ENCODE measurements at regions of chr2 and their contacts with region 1.

Region 1: DNA sequence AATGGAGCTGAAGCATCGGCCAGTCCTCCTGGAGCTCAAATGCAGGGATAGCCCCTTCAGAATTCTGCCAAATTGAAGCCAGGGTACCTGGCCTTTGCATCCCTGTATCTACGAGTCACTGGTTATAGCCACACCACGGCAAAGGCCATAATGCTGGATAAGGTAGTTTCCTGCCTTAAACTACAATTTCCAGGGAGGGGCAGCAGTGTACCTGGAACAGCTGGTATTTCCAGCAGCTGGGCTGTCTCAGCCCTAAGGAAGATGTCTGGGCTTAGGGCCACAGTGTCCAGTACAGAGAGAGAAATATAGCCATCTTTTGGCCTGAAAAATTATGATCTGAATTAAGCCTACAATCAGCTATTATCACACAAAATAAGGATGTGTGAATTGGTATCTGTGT is 180.3 kb downstream of the GCA start:
- DNase-seq: peak; percentile 63 to 73
- H3K4me3 ChIP-seq: no peak overlapping the region
- H3K4me3 Mint-ChIP-seq: no peak overlapping the region
- H3K27ac Mint-ChIP-seq: no peak overlapping the region
- H3K4me1 ChIP-seq: no peaks in the 10 kb centered on the region
- H3K4me1 Mint-ChIP-seq: no peaks in the 10 kb centered on the region
- H3K27me3 ChIP-seq: no peaks in the 10 kb centered on the region
- H3K27me3 Mint-ChIP-seq: peaks cover 7% of the 10 kb centered on the region
- CTCF ChIP-seq: peak; percentile 48 to 62

Region 2: DNA sequence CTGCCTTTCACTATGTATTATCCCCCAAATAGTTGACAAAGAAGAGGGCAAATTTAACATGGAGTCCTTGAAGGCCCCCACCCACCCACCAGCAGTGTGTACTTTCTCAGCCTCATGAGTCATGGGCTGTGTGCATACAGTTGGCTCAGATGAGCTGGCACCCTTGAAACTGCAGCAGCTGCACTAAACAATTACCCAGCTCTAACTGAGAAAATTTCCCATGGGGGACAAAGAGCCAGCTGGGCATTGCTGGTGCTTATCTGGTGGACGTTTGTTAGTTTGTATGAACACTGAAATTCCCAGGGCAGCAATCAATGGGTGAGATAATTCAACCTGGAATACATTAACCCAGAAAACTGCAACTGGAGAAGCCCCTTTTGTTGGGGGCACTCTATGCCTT is 48.5 kb before region 1 on chr2:
- CTCF ChIA-PET with region 1: no interaction called
- POLR2A ChIA-PET with region 1: no interaction called
- intact Hi-C with region 1: no loop called
- DNase-seq: no peak
- H3K4me3 ChIP-seq: no peak overlapping the region
- H3K4me3 Mint-ChIP-seq: no peak overlapping the region
- H3K27ac Mint-ChIP-seq: no peak overlapping the region
- H3K4me1 ChIP-seq: no peaks in the 10 kb centered on the region
- H3K4me1 Mint-ChIP-seq: no peaks in the 10 kb centered on the region
- H3K27me3 ChIP-seq: no peaks in the 10 kb centered on the region
- H3K27me3 Mint-ChIP-seq: peaks cover 5% of the 10 kb centered on the region
- CTCF ChIP-seq: no peak

Region 3: GRCh38 chr2:162581959-162582798 is 58.0 kb after region 1 on chr2:
- CTCF ChIA-PET with region 1: no interaction called
- POLR2A ChIA-PET with region 1: no interaction called
- intact Hi-C with region 1: loop called (anchors 1 kb)
- DNase-seq: peak; percentile 77 to 84
- H3K4me3 ChIP-seq: no peak overlapping the region
- H3K4me3 Mint-ChIP-seq: no peak overlapping the region
- H3K27ac Mint-ChIP-seq: peak overlapping the region; percentile 62
- H3K4me1 ChIP-seq: peaks cover 46% of the 10 kb centered on the region
- H3K4me1 Mint-ChIP-seq: peaks cover 47% of the 10 kb centered on the region
- H3K27me3 ChIP-seq: no peaks in the 10 kb centered on the region
- H3K27me3 Mint-ChIP-seq: no peaks in the 10 kb centered on the region
- CTCF ChIP-seq: no peak

Region 4: GRCh38 chr2:162646794-162647193 is 122.6 kb after region 1 on chr2:
- CTCF ChIA-PET with region 1: no interaction called
- POLR2A ChIA-PET with region 1: no interaction called
- intact Hi-C with region 1: loop called (anchors 5 kb)
- DNase-seq: no peak
- H3K4me3 ChIP-seq: no peak overlapping the region
- H3K4me3 Mint-ChIP-seq: no peak overlapping the region
- H3K27ac Mint-ChIP-seq: no peak overlapping the region
- H3K4me1 ChIP-seq: no peaks in the 10 kb centered on the region
- H3K4me1 Mint-ChIP-seq: no peaks in the 10 kb centered on the region
- H3K27me3 ChIP-seq: no peaks in the 10 kb centered on the region
- H3K27me3 Mint-ChIP-seq: no peaks in the 10 kb centered on the region
- CTCF ChIP-seq: no peak

Region 5: GRCh38 chr2:162749994-162750393 is 225.8 kb after region 1 on chr2:
- CTCF ChIA-PET with region 1: no interaction called
- POLR2A ChIA-PET with region 1: no interaction called
- intact Hi-C with region 1: loop called (anchors 5 kb)
- DNase-seq: peak in 1 of 2 experiments; percentile 9
- H3K4me3 ChIP-seq: no peak overlapping the region
- H3K4me3 Mint-ChIP-seq: no peak overlapping the region
- H3K27ac Mint-ChIP-seq: no peak overlapping the region
- H3K4me1 ChIP-seq: peaks cover 5% of the 10 kb centered on the region; the same call in 1 of the 2 replicates
- H3K4me1 Mint-ChIP-seq: peaks cover 8% of the 10 kb centered on the region
- H3K27me3 ChIP-seq: no peaks in the 10 kb centered on the region
- H3K27me3 Mint-ChIP-seq: peaks cover 3% of the 10 kb centered on the region
- CTCF ChIP-seq: no peak

Region 6: GRCh38 chr2:162890690-162891311 is 366.6 kb after region 1 on chr2:
- CTCF ChIA-PET with region 1: no interaction called
- POLR2A ChIA-PET with region 1: no interaction called
- intact Hi-C with region 1: loop called (anchors 1 kb)
- DNase-seq: peak; percentile 41 to 43
- H3K4me3 ChIP-seq: no peak overlapping the region
- H3K4me3 Mint-ChIP-seq: no peak overlapping the region
- H3K27ac Mint-ChIP-seq: no peak overlapping the region
- H3K4me1 ChIP-seq: no peaks in the 10 kb centered on the region
- H3K4me1 Mint-ChIP-seq: no peaks in the 10 kb centered on the region
- H3K27me3 ChIP-seq: no peaks in the 10 kb centered on the region
- H3K27me3 Mint-ChIP-seq: no peaks in the 10 kb centered on the region
- CTCF ChIP-seq: peak; percentile 82 to 83

Measured in Caco-2 (cell line).